Heart right ventricle (tissue), 16 donors: ENCODE measurements at regions of chr10 and their contacts with region 1.

Region 1: GRCh38 chr10:101889256-101890210 is 45.9 kb upstream of the KCNIP2 start:
- DNase-seq: peak; percentile 62 to 79
- ATAC-seq: peak in 3 of 8 donors; percentile 52 to 60 (median 59)
- H3K4me3 ChIP-seq: no peak overlapping the region
- H3K27ac ChIP-seq: peak overlapping the region in 3 of 10 donors; percentile 43 to 59 (median 56)
- H3K4me1 ChIP-seq: peaks cover 0 to 63% (median 21%) of the 10 kb centered on the region in 9 donors
- H3K27me3 ChIP-seq: no peaks in the 10 kb centered on the region
- CTCF ChIP-seq: peak; percentile 46 to 83 (median 78)

Region 2: DNA sequence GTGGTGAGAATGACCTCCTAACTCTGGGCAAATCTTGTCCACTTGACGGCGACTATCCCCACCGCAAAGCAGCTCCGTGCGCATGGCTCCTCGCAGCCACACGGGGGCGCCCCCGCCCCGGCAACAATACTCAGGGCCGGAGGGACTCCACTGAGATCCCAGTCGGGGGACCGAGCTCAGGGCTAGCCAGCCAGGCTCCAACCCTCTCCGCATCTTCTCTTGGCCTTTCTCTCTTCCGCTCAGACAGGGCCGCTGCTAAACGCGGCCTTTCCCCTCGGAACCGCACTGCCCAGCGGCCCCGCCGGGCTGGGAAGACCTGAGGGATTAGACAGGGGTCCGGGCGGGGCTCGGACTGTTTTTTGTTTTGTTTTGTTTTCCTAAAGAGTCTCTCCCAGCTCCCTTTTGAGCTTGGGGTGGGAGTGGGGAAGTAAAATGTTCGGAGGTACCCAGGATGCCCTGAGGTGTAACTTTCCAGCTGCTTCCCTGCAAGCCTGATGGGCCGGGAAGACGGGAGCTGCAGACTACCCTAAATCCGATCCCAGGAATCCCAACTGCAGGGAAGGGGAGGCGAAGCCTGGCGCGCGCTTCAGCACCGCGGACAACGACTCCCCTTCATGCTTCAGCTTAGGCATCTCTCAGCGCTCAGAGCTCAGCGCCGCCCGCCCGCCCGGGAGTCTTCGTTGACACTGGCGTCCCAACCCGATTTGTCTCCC is 48.6 kb before region 1 on chr10:
- intact Hi-C with region 1: loop called in 6 of 10 experiments (anchors 5 kb)
- DNase-seq: peak; percentile 80 to 84
- ATAC-seq: peak; percentile 70 to 92 (median 86)
- H3K4me3 ChIP-seq: peak overlapping the region in 9 of 10 donors; percentile 24 to 58 (median 43)
- H3K27ac ChIP-seq: peak overlapping the region in 2 of 10 donors; percentile 10 to 53
- H3K4me1 ChIP-seq: peaks cover 10 to 75% (median 45%) of the 10 kb centered on the region in 9 donors
- H3K27me3 ChIP-seq: no peaks in the 10 kb centered on the region
- CTCF ChIP-seq: peak; percentile 89 to 98 (median 90)

Region 3: DNA sequence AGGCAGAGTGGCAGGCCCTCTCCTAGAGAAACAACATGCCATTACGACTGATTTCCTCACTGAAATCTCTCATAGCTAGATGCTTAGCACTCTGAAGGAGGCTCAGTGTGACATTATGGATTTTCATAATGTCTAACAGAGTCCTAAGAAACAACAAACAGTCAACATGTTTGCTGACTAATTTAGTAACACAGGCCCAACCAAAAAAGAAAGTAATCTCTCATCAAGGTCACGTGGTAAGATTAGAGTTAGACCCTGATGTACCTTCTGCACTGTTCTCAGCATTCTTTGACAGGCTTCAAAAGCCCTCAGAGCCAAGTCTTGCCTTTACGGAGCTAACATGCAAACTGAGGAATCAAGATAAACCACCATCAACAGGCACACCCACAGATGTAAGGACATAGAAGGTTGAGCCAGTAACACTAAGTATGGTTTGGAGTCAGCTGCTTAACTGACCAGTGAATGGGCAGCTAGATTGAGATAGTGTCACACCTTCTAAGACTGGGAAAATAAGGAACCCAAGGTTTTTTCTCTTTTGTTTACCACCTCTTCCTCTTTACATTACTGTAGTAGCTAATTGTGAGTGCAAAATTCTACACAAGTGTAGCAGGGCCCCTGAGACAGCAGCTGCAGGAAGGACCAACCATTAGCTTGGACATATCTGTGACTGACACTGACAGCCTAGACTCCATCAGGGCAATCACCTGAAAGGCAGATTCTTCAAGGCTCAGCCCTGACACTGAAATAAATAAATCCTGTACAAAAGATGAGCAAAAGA is 30.6 kb before region 1 on chr10:
- intact Hi-C with region 1: loop called in 1 of 10 experiments (anchors 2 kb)
- DNase-seq: no peak
- ATAC-seq: peak in 2 of 8 donors; percentile 22 to 63
- H3K4me3 ChIP-seq: no peak overlapping the region
- H3K27ac ChIP-seq: peak overlapping the region in 8 of 10 donors; percentile 20 to 64 (median 44)
- H3K4me1 ChIP-seq: peaks cover 3 to 44% (median 38%) of the 10 kb centered on the region in 9 donors
- H3K27me3 ChIP-seq: no peaks in the 10 kb centered on the region
- CTCF ChIP-seq: no peak

Region 4: GRCh38 chr10:101961591-101962498 is 72.3 kb after region 1 on chr10:
- intact Hi-C with region 1: loop called in 5 of 10 experiments (anchors 5 to 10 kb)
- DNase-seq: peak in 1 of 2 donors; percentile 66
- ATAC-seq: peak; percentile 69 to 94 (median 90)
- H3K4me3 ChIP-seq: no peak overlapping the region
- H3K27ac ChIP-seq: peak overlapping the region; percentile 62 to 94 (median 81)
- H3K4me1 ChIP-seq: peaks cover 0 to 55% (median 13%) of the 10 kb centered on the region in 9 donors
- H3K27me3 ChIP-seq: no peaks in the 10 kb centered on the region
- CTCF ChIP-seq: no peak